ENCODE measurements at regions of chr20 and their contacts with region 1.

Region 1: GRCh38 chr20:41136680-41137613 is at the start of gene PLCG1:
- DNase-seq: peak; percentile 92
- ATAC-seq: peak; percentile 67
- H3K4me3 Mint-ChIP-seq: peak within 1 kb of the TSS; percentile 89
- H3K27ac Mint-ChIP-seq: peak within 1 kb of the TSS; percentile 83
- H3K4me1 Mint-ChIP-seq: peaks cover 50% of the 10 kb centered on the region
- H3K27me3 Mint-ChIP-seq: peaks cover 13% of the 10 kb centered on the region
- CTCF ChIP-seq: no peak
- total RNA-seq, gene PLCG1: 177 to 201 TPM (median 194 TPM) in 3 replicates

Region 2: GRCh38 chr20:40868551-40869217 is 268.3 kb before region 1 on chr20:
- CTCF ChIA-PET with region 1: no interaction called
- POLR2A ChIA-PET with region 1: no interaction called
- DNase-seq: no peak
- ATAC-seq: no peak
- H3K4me3 Mint-ChIP-seq: no peak overlapping the region
- H3K27ac Mint-ChIP-seq: no peak overlapping the region
- H3K4me1 Mint-ChIP-seq: peaks cover 7% of the 10 kb centered on the region
- H3K27me3 Mint-ChIP-seq: no peaks in the 10 kb centered on the region
- CTCF ChIP-seq: no peak

Region 3: DNA sequence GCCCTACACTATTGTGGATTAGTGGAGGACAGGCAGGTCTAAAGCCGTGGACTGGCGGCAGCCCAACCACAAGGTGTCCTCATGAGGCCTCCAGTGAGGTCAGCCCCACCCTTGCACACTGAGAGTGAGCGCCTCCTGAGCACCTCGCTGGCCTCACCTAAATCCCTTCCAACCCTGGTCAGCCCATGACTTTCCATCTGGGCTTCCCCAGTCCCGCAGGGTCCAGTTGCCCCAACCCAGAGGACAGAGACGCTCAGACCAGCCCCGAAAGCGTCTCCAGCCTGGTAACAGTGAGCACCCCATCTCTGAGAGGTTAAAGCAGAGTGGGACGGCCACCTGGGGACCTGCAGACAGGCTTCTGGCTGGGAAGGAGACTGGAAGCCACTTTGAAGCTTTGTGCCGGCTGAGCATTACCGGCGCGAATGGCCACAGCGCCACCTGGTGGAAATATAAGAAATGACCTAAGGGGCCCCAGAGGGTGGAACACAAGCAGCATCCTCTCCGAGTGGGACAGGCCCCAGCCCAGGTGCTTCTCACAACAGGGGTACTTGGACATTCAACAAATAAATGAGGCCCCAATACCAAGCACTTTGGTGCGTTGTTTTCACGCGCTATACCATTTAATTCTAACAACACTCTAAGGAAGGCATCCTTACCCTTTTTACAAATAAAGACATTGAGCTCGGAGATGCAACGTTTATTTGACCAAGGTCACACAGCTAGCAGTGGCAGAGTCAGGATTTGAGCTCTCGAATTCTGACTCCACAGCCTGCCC is 174.0 kb before region 1 on chr20:
- CTCF ChIA-PET with region 1: interaction called, 26 read pairs
- POLR2A ChIA-PET with region 1: no interaction called
- DNase-seq: peak; percentile 81
- ATAC-seq: peak; percentile 88
- H3K4me3 Mint-ChIP-seq: no peak overlapping the region
- H3K27ac Mint-ChIP-seq: no peak overlapping the region
- H3K4me1 Mint-ChIP-seq: 0 out of 2 replicates have a peak, but pooled peaks cover 2% of the 10 kb centered on the region
- H3K27me3 Mint-ChIP-seq: no peaks in the 10 kb centered on the region
- CTCF ChIP-seq: peak; percentile 96

Region 4: DNA sequence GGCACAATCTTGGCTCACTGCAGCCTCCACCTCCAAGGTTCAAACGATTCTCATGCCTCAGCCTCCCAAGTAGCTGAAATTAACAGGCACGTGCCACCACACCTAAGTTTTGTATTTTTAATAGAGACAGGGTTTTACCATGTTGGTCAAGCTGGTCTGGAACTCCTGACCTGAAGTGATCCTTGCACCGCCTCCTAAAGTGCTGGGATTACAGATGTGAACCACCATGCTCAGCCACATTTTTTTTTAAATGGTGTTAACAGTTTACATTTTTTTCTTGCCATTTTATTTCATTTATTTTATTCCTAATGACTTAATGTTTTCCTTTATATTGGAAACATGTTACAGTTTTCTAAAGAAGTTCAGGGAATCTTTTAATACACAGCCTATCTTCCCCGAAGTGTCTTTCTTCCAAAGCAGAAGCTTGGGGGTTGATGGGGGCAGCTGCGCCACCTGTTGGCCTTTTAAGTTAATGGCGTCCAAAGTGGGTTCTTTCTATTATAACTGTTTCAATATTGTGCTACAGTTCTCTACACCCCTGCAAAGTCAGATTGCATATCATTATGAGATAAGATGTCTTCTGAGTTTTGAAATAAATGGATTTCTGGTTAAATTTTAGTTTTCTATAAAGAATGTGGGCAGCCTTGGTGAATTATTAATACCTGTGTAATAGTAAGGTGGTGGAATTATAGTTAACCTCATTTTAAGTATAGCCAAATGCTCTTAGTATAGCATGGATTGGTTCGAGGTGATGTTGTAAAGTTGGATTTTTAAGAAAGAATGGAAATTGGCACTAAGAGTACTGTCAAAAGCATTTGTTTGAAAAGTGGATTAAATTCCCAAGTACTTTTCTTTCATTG is 41.6 kb before region 1 on chr20:
- CTCF ChIA-PET with region 1: interaction called, 14 read pairs
- POLR2A ChIA-PET with region 1: no interaction called
- DNase-seq: peak; percentile 56
- ATAC-seq: peak; percentile 58
- H3K4me3 Mint-ChIP-seq: no peak overlapping the region
- H3K27ac Mint-ChIP-seq: no peak overlapping the region
- H3K4me1 Mint-ChIP-seq: no peaks in the 10 kb centered on the region
- H3K27me3 Mint-ChIP-seq: no peaks in the 10 kb centered on the region
- CTCF ChIP-seq: peak; percentile 70

Region 5: DNA sequence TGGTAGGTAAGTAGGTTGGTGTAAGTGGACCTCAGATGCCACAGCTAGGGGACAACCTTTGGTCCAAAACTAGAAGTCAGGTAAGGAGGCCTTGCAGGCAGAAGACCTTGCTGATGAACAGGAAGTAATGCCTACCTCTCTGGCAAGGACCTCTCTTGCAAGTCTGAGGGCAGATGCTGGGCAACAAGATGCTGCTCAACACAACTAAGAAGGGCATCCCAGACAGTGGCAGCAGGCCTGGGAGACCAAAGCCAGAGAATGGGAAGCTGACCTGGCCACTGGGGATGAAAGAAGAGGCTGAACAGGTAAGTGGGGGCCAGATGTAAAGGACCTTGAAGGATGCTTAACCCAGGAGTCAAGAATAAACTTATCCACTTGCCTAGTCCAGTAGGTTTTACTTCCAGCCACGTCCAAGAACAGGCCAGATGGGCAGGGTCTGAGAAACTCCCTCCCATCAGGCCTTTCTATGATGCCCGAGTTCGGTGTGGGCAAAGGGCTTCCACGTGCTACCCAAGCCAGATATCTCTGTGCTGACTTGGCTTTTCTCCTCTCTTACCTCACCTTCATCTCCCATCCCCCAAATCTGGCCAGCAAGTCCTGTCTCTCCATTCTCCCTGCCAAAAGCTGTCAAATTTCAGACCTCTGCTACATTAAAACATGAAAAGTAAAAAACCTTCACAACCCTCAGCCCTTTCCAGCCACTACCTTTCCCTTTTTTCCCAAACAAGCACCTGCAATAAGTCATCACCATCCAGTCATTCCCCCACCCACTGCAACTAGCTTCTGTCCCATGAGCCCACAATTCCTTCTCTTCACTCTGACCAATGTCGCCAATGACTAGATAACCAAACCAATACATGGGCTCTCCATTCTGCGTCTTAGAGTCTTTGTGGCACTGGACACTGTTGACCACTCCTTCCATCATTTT is 11.2 kb before region 1 on chr20:
- CTCF ChIA-PET with region 1: interaction called, 16 read pairs
- POLR2A ChIA-PET with region 1: interaction called, 3 read pairs
- DNase-seq: no peak
- ATAC-seq: no peak
- H3K4me3 Mint-ChIP-seq: no peak overlapping the region
- H3K27ac Mint-ChIP-seq: 0 out of 2 replicates have a peak overlapping the region, but pooled peaks have one; percentile 2
- H3K4me1 Mint-ChIP-seq: no peaks in the 10 kb centered on the region
- H3K27me3 Mint-ChIP-seq: no peaks in the 10 kb centered on the region
- CTCF ChIP-seq: no peak

Region 6: DNA sequence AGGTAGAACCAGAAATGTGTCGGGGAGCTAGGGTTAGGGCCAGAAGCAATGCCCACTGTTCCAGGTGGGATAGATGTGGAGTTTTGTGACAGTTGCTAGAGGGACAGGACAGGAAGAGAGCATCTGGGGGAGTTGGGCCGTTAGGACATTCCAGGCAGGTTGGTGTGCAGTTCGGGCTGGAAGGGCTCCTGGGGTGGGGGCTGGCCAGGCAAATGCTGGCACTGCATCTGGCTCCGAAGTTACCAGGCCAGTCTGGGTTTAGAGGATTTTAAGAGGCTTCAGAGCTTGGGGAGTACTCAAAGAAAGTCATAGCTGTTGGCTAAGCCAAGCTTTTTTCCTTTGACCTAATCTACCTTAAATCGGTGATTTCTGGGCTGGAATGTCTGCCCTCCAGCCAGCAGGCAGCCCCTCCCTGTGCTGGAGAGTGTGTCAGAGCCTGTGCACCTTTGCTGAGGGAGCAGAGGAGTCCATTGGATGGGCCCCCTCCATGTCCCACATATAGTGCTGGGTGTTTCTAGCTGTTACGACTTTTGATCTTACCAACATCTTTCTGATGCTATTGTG is 21.2 kb after region 1 on chr20:
- CTCF ChIA-PET with region 1: interaction called, 41 read pairs
- POLR2A ChIA-PET with region 1: no interaction called
- DNase-seq: no peak
- ATAC-seq: no peak
- H3K4me3 Mint-ChIP-seq: no peak overlapping the region
- H3K27ac Mint-ChIP-seq: peak overlapping the region; percentile 88
- H3K4me1 Mint-ChIP-seq: peaks cover 45% of the 10 kb centered on the region
- H3K27me3 Mint-ChIP-seq: no peaks in the 10 kb centered on the region
- CTCF ChIP-seq: no peak

Region 7: DNA sequence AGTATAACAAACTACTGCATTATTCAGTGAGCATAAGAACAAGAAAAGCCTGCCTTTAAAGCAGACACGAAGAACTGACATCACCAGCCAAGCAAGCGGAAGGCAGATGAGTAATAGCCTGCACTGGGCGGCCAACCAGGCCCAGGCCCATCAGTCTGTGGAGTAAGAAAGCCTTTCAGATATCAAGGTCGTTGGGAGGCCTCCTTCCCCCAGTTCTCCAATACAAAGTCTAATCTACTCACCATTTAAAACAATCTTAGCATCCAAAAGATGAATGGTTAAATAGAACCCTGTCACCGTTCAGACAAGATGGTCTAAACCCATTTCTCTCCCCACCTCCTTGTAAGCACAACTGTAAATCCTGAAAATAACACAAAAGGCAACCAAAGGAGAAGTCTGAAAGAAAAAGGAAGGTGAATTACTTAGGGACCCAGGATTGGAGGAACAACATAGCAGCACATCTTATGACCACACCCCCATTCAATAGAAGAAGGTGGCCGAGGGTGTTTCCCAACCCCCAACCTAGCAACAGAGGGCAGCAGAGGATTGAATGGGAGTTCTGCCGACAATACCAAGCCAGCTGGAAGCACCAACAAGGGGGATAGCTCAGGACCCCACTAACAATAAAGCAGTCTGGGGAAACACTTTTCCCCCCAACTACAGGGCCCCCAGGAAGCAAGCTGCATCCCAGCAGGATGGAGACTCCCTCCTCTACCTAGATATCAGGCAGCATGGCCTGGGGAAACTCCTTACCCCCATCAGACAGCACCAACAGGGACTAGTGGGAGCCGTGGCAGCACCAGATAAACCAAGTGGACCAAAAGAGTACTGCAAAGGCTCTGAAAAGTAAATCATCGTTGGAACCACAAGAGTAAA is 112.7 kb after region 1 on chr20:
- CTCF ChIA-PET with region 1: interaction called, 15 read pairs
- POLR2A ChIA-PET with region 1: no interaction called
- DNase-seq: peak; percentile 71
- ATAC-seq: peak; percentile 90
- H3K4me3 Mint-ChIP-seq: no peak overlapping the region; the same call in 1 of the 2 replicates
- H3K27ac Mint-ChIP-seq: peak overlapping the region; percentile 80; the same call in 1 of the 2 replicates
- H3K4me1 Mint-ChIP-seq: peaks cover 5% of the 10 kb centered on the region; the same call in 1 of the 2 replicates
- H3K27me3 Mint-ChIP-seq: peaks cover 37% of the 10 kb centered on the region
- CTCF ChIP-seq: peak; percentile 41; the same call in 1 of the 2 replicates

Region 8: GRCh38 chr20:41261790-41262717 is 125.1 kb after region 1 on chr20:
- CTCF ChIA-PET with region 1: no interaction called
- POLR2A ChIA-PET with region 1: no interaction called
- DNase-seq: no peak
- ATAC-seq: no peak
- H3K4me3 Mint-ChIP-seq: no peak overlapping the region
- H3K27ac Mint-ChIP-seq: no peak overlapping the region
- H3K4me1 Mint-ChIP-seq: no peaks in the 10 kb centered on the region
- H3K27me3 Mint-ChIP-seq: no peaks in the 10 kb centered on the region
- CTCF ChIP-seq: no peak

Measured in WTC11 (cell line).